ENCODE measurements at regions of chr6 and their contacts with region 1.

Region 1: DNA sequence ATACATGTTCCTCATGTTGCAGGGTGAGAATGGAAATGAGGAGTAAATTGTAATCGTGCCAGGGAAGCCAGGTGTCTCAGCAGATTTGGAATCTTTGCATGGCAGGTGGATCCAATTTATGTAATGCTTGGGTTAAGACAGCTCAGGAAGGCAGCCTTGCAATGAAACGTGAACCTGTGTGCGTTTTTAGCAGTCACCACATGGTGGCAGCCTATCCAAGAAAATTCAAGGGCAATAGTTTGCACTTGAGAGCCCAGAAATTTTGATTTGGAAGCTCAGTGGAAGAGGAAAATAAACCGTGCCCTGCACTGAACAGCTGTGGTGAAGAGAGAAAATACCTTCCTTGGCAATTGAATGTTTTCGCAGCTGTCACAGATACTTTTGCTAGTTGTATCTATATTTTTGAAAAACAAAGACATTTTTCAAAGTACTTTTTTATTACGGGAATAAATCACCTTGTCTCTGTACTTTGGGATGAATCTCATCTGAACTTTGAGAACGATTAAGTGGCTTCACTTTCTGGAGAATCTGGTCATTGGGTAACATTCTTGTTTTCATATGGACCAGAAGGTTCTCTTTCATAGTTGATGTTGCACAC is 26.5 kb downstream of the MTHFD1L start:
- DNase-seq: peak; percentile 69
- H3K4me3 Mint-ChIP-seq: no peak overlapping the region
- H3K27ac Mint-ChIP-seq: no peak overlapping the region
- H3K4me1 Mint-ChIP-seq: peaks cover 29% of the 10 kb centered on the region
- H3K27me3 Mint-ChIP-seq: no peaks in the 10 kb centered on the region

Region 2: DNA sequence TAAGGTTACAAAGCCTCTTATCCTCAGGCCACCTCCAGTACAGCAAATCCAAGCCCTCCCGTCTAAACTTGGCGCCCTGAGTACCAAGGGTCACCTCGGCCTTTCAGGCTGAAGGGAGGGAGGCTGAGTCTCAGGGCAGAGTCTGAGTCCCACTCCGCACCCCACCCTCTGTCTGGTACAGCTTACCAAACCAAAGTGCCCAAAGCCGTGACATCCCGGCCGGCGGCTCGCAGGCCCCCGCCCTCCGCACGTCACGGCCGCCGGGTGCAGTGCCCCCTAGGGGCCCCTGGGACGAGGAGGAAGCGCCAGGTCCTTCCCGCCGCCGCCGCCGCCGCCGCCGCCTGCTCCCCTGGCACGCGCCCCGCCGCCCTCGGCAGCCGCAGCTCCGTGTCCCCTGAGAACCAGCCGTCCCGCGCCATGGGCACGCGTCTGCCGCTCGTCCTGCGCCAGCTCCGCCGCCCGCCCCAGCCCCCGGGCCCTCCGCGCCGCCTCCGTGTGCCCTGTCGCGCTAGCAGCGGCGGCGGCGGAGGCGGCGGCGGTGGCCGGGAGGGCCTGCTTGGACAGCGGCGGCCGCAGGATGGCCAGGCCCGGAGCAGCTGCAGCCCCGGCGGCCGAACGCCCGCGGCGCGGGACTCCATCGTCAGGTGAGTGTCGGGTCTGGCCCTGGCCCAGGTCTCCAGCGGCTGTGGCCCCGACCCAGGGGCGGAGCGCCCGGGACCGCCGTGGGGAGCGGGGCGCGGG is 26.4 kb before region 1 on chr6 and contains the start of gene MTHFD1L:
- CTCF ChIA-PET with region 1: interaction called, 15 read pairs
- POLR2A ChIA-PET with region 1: no interaction called
- intact Hi-C with region 1: no loop called
- DNase-seq: peak; percentile 84
- H3K4me3 Mint-ChIP-seq: peak within 1 kb of the TSS; percentile 92
- H3K27ac Mint-ChIP-seq: peak within 1 kb of the TSS; percentile 91
- H3K4me1 Mint-ChIP-seq: peaks cover 22% of the 10 kb centered on the region
- H3K27me3 Mint-ChIP-seq: peaks cover 13% of the 10 kb centered on the region
- total RNA-seq, gene MTHFD1L: 115 to 119 TPM

Region 3: DNA sequence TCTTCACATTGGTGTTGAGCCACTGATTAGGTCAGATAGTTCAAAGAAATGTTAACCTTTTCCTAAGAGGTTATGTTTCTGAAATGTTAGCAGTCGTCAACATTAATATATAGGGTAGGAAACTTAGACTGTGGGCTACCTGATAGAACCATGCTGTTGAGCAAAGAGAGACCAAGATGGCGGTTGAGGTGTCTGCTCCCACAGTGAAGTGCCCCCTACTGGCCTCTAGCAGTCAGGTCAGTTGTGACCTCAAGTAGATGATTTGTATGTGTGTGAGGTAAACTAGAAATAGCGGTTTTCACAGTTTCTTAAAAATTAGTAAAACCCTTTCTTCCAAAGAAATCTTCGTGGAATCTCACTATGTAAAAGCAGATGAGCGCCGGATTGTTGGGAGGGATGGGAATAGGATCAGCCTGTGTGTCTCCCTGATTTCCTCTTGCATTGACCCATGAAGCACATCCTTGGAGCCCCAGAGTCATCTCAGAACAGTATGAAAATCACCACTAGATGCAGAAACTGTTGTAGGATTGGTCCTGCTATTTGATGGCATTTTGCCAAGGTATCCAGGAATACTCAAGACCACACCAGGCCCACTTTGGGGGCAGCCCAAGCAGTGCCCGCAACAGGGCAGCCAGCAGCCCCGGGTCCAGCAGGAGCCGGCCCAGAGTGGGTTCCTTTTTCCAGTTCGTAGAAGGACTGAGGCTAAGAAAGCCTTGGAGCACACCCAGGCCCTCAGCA is 14.0 kb after region 1 on chr6:
- CTCF ChIA-PET with region 1: interaction called, 51 read pairs
- POLR2A ChIA-PET with region 1: no interaction called
- intact Hi-C with region 1: no loop called
- DNase-seq: no peak
- H3K4me3 Mint-ChIP-seq: no peak overlapping the region
- H3K27ac Mint-ChIP-seq: no peak overlapping the region
- H3K4me1 Mint-ChIP-seq: no peaks in the 10 kb centered on the region
- H3K27me3 Mint-ChIP-seq: no peaks in the 10 kb centered on the region

Region 4: GRCh38 chr6:151014404-151015100 is 122.6 kb after region 1 on chr6:
- CTCF ChIA-PET with region 1: interaction called, 7 read pairs
- POLR2A ChIA-PET with region 1: no interaction called
- intact Hi-C with region 1: loop called (anchors 2 kb)
- DNase-seq: peak; percentile 69
- H3K4me3 Mint-ChIP-seq: no peak overlapping the region
- H3K27ac Mint-ChIP-seq: no peak overlapping the region
- H3K4me1 Mint-ChIP-seq: peaks cover 1% of the 10 kb centered on the region
- H3K27me3 Mint-ChIP-seq: no peaks in the 10 kb centered on the region

Region 5: GRCh38 chr6:151339369-151339768 is 447.4 kb after region 1 on chr6:
- CTCF ChIA-PET with region 1: interaction called, 56 read pairs
- POLR2A ChIA-PET with region 1: no interaction called
- intact Hi-C with region 1: loop called (anchors 2 kb)
- DNase-seq: no peak
- H3K4me3 Mint-ChIP-seq: no peak overlapping the region
- H3K27ac Mint-ChIP-seq: no peak overlapping the region
- H3K4me1 Mint-ChIP-seq: no peaks in the 10 kb centered on the region
- H3K27me3 Mint-ChIP-seq: no peaks in the 10 kb centered on the region

Measured in activated CD4-positive, alpha-beta memory T cell treated with anti-CD3 and anti-CD28 coated beads for 36 hours (primary cell).